B cell (primary cell): ENCODE measurements at regions of chr3 and their contacts with region 1.

Region 1: DNA sequence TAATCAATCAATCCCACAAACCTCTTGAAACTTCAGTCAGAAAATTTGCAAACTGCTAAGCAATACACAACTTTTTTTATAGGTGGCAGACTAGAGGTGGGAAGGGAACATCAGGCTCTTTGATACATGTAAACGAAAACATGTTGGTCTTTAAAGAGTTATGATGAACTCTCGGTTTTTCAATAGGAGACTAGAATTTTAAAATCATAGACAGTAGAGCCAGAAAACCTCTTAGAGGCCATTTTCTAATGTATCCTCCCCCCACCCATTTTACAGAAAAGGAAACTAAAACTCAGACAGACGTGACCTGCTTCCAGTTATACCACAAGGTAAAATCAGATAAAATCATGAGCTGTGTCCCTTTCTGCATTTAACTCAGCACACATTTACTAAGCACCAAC is 179.1 kb upstream of the LPP start:
- DNase-seq: peak; percentile 56
- ATAC-seq: no peak
- H3K4me3 ChIP-seq: peak overlapping the region in 3 of 5 experiments; percentile 29 to 51 (median 34)
- H3K4me3 Mint-ChIP-seq: peak overlapping the region; percentile 81
- H3K27ac ChIP-seq: no peak overlapping the region
- H3K27ac Mint-ChIP-seq: peak overlapping the region; percentile 73
- H3K4me1 ChIP-seq: peaks cover 51 to 57% of the 10 kb centered on the region in 2 donors
- H3K4me1 Mint-ChIP-seq: peaks cover 65% of the 10 kb centered on the region
- H3K27me3 ChIP-seq: peaks cover 0 to 14% (median 5%) of the 10 kb centered on the region in 4 experiments
- H3K27me3 Mint-ChIP-seq: peaks cover 26% of the 10 kb centered on the region
- CTCF ChIP-seq: peak; percentile 22

Region 2: GRCh38 chr3:187777331-187777941 is 197.4 kb before region 1 on chr3:
- CTCF ChIA-PET with region 1: no interaction called
- POLR2A ChIA-PET with region 1: no interaction called
- intact Hi-C with region 1: loop called (anchors 1 kb)
- DNase-seq: peak; percentile 78
- ATAC-seq: peak; percentile 80
- H3K4me3 ChIP-seq: no peak overlapping the region
- H3K4me3 Mint-ChIP-seq: peak overlapping the region; percentile 62
- H3K27ac ChIP-seq: peak overlapping the region in 1 of 2 donors; percentile 6
- H3K27ac Mint-ChIP-seq: peak overlapping the region; percentile 89
- H3K4me1 ChIP-seq: peaks cover 29 to 35% of the 10 kb centered on the region in 2 donors
- H3K4me1 Mint-ChIP-seq: peaks cover 33% of the 10 kb centered on the region
- H3K27me3 ChIP-seq: no peaks in the 10 kb centered on the region
- H3K27me3 Mint-ChIP-seq: no peaks in the 10 kb centered on the region
- CTCF ChIP-seq: no peak

Region 3: GRCh38 chr3:187828579-187829452 is 146.1 kb before region 1 on chr3:
- CTCF ChIA-PET with region 1: no interaction called
- POLR2A ChIA-PET with region 1: no interaction called
- intact Hi-C with region 1: no loop called
- DNase-seq: no peak
- ATAC-seq: no peak
- H3K4me3 ChIP-seq: no peak overlapping the region
- H3K4me3 Mint-ChIP-seq: no peak overlapping the region
- H3K27ac ChIP-seq: no peak overlapping the region
- H3K27ac Mint-ChIP-seq: no peak overlapping the region
- H3K4me1 ChIP-seq: peaks cover 6 to 7% of the 10 kb centered on the region in 2 donors
- H3K4me1 Mint-ChIP-seq: peaks cover 7% of the 10 kb centered on the region
- H3K27me3 ChIP-seq: no peaks in the 10 kb centered on the region
- H3K27me3 Mint-ChIP-seq: no peaks in the 10 kb centered on the region
- CTCF ChIP-seq: no peak

Region 4: DNA sequence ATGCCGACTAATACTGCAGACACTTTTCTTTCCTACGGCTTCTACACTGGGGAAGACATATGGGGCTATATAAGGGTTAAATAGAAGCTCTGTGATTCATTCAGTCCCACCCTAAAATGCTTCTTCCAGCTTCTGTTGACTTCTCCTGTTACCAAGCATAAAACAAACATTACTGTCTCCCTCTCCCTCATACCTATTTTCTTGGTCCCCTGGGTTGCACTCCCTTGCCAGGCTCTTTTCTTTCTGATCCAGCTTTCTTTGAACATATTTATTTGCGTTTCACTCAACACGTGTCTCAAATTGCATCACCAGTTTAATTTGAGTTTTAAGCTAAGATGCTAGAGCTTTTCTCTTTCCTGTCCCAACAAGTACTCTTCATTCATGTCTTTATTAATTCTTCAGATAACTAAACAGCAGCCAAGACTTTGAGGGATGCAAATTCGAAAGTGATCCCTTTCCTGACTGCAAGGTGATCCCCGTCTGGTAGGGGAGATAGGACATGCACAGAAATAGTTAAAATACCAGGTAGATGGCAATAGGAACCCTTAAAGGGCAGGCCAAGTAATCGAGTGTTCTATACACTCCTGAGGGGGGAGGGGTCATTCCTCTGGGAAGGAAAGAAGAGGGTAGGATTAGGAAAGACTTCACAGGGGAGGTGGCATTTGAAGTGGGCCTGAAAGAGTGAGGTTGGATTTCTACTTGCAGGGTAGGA is 31.0 kb before region 1 on chr3:
- CTCF ChIA-PET with region 1: interaction called, 4 read pairs
- POLR2A ChIA-PET with region 1: no interaction called
- intact Hi-C with region 1: loop called (anchors 5 kb)
- DNase-seq: no peak
- ATAC-seq: no peak
- H3K4me3 ChIP-seq: no peak overlapping the region
- H3K4me3 Mint-ChIP-seq: no peak overlapping the region
- H3K27ac ChIP-seq: no peak overlapping the region
- H3K27ac Mint-ChIP-seq: no peak overlapping the region
- H3K4me1 ChIP-seq: peaks cover 45 to 54% of the 10 kb centered on the region in 2 donors
- H3K4me1 Mint-ChIP-seq: peaks cover 14% of the 10 kb centered on the region
- H3K27me3 ChIP-seq: peaks cover 0 to 5% (median 0%) of the 10 kb centered on the region in 4 experiments
- H3K27me3 Mint-ChIP-seq: peaks cover 25% of the 10 kb centered on the region
- CTCF ChIP-seq: no peak

Region 5: DNA sequence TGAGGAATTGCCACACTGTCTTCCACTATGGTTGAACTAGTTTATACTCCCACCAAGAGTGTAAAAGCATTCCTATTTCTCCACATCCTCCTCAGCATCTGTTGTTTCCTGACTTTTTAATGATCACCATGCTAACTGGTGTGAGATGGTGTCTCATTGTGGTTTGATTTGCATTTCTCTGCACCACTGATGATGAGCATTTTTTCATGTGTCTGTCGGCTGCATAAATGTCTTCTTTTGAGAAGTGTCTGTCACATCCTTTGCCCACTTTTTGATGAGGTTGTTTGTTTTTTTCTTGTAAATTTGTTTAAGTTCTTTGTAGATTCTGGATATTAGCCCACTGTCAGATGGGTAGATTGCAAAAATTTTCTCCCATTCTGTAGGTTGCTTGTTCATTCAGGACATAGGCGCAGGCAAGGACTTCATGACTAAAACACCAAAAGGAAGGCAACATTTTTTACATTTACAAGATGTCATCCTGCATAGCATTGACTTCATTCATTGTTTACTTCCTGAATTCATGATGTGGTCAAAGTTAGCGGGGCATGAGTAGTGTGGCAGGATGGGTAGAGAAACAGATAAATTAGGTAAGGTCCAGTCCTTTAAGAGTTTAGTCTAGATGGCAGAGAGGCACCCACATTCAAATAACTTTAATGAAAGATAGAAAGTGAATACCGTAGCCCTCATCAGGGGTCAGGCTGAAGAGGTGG is 134.0 kb after region 1 on chr3:
- CTCF ChIA-PET with region 1: no interaction called
- POLR2A ChIA-PET with region 1: no interaction called
- intact Hi-C with region 1: loop called (anchors 2 kb)
- DNase-seq: peak; percentile 62
- ATAC-seq: peak; percentile 92
- H3K4me3 ChIP-seq: no peak overlapping the region
- H3K4me3 Mint-ChIP-seq: peak overlapping the region; percentile 59
- H3K27ac ChIP-seq: peak overlapping the region in 1 of 2 donors; percentile 52
- H3K27ac Mint-ChIP-seq: peak overlapping the region; percentile 87
- H3K4me1 ChIP-seq: peaks cover 19 to 29% of the 10 kb centered on the region in 2 donors
- H3K4me1 Mint-ChIP-seq: peaks cover 31% of the 10 kb centered on the region
- H3K27me3 ChIP-seq: no peaks in the 10 kb centered on the region
- H3K27me3 Mint-ChIP-seq: no peaks in the 10 kb centered on the region
- CTCF ChIP-seq: no peak

Region 6: GRCh38 chr3:188244395-188244861 is 269.6 kb after region 1 on chr3:
- CTCF ChIA-PET with region 1: no interaction called
- POLR2A ChIA-PET with region 1: no interaction called
- intact Hi-C with region 1: loop called (anchors 2 kb)
- DNase-seq: peak; percentile 56
- ATAC-seq: peak; percentile 64
- H3K4me3 ChIP-seq: no peak overlapping the region
- H3K4me3 Mint-ChIP-seq: peak overlapping the region; percentile 42
- H3K27ac ChIP-seq: peak overlapping the region; percentile 43 to 79
- H3K27ac Mint-ChIP-seq: peak overlapping the region; percentile 60
- H3K4me1 ChIP-seq: peaks cover 53 to 54% of the 10 kb centered on the region in 2 donors
- H3K4me1 Mint-ChIP-seq: peaks cover 70% of the 10 kb centered on the region
- H3K27me3 ChIP-seq: no peaks in the 10 kb centered on the region
- H3K27me3 Mint-ChIP-seq: no peaks in the 10 kb centered on the region
- CTCF ChIP-seq: no peak

Region 7: GRCh38 chr3:188584162-188584529 is 609.3 kb after region 1 on chr3:
- CTCF ChIA-PET with region 1: interaction called, 3 read pairs
- POLR2A ChIA-PET with region 1: interaction called, 7 read pairs
- intact Hi-C with region 1: loop called (anchors 10 kb)
- DNase-seq: no peak
- ATAC-seq: no peak
- H3K4me3 ChIP-seq: peak overlapping the region in 1 of 5 experiments; percentile 13
- H3K4me3 Mint-ChIP-seq: no peak overlapping the region
- H3K27ac ChIP-seq: peak overlapping the region; percentile 6 to 73
- H3K27ac Mint-ChIP-seq: no peak overlapping the region
- H3K4me1 ChIP-seq: peaks cover 49 to 53% of the 10 kb centered on the region in 2 donors
- H3K4me1 Mint-ChIP-seq: peaks cover 32% of the 10 kb centered on the region
- H3K27me3 ChIP-seq: no peaks in the 10 kb centered on the region
- H3K27me3 Mint-ChIP-seq: no peaks in the 10 kb centered on the region
- CTCF ChIP-seq: no peak

Region 8: DNA sequence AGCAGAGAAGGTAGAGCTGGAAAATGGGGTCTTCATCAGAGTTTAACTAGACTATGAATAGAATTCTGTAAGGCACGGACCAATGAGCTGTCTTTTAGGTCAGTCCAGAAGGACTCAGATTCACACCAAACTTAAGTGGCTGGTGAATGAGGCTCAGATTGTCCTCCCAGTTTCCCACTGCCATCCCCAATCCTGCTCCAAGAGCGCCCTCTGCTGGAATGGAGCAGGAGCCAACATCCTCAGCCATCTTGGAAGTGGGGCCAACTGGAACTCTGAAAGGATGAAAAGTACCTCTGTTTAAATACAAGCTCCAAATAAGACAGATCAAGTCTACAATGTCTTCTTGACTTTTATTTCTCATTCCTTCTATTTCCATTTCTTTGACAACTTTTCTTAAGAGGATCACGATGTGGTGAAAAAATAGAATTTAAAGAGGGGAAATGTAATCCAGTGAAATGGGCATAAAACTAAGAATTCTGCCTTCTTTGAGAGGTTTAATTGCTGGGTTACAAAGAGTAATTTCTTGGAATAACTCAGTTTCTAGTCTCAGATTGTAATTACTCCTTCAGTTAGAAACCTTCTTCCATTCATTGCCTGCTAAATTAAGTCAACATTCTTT is 979.8 kb after region 1 on chr3:
- CTCF ChIA-PET with region 1: interaction called, 6 read pairs
- POLR2A ChIA-PET with region 1: no interaction called
- intact Hi-C with region 1: loop called (anchors 10 kb)
- DNase-seq: peak; percentile 82
- ATAC-seq: peak; percentile 83
- H3K4me3 ChIP-seq: no peak overlapping the region
- H3K4me3 Mint-ChIP-seq: no peak overlapping the region
- H3K27ac ChIP-seq: no peak overlapping the region
- H3K27ac Mint-ChIP-seq: no peak overlapping the region
- H3K4me1 ChIP-seq: no peaks in the 10 kb centered on the region
- H3K4me1 Mint-ChIP-seq: peaks cover 3% of the 10 kb centered on the region
- H3K27me3 ChIP-seq: no peaks in the 10 kb centered on the region
- H3K27me3 Mint-ChIP-seq: no peaks in the 10 kb centered on the region
- CTCF ChIP-seq: peak; percentile 88